ENCODE measurements at regions of chr6 and their contacts with region 1.

Region 1: GRCh38 chr6:110467566-110468140 is 8.8 kb downstream of the SLC22A16 start:
- DNase-seq: no peak
- H3K4me3 ChIP-seq: no peak overlapping the region
- H3K27ac ChIP-seq: no peak overlapping the region
- H3K4me1 ChIP-seq: no peaks in the 10 kb centered on the region
- H3K27me3 ChIP-seq: peaks cover 5% of the 10 kb centered on the region
- CTCF ChIP-seq: no peak

Region 2: GRCh38 chr6:110506177-110506576 is 38.5 kb after region 1 on chr6:
- CTCF ChIA-PET with region 1: interaction called, 11 read pairs
- dilution Hi-C with region 1: no loop called
- in situ Hi-C with region 1: no loop called
- intact Hi-C with region 1: no loop called
- DNase-seq: no peak
- H3K4me3 ChIP-seq: no peak overlapping the region
- H3K27ac ChIP-seq: no peak overlapping the region
- H3K4me1 ChIP-seq: peaks cover 23% of the 10 kb centered on the region
- H3K27me3 ChIP-seq: no peaks in the 10 kb centered on the region
- CTCF ChIP-seq: no peak